GM10248 (cell line): ENCODE measurements at regions of chr7 and their contacts with region 1.

Region 1: DNA sequence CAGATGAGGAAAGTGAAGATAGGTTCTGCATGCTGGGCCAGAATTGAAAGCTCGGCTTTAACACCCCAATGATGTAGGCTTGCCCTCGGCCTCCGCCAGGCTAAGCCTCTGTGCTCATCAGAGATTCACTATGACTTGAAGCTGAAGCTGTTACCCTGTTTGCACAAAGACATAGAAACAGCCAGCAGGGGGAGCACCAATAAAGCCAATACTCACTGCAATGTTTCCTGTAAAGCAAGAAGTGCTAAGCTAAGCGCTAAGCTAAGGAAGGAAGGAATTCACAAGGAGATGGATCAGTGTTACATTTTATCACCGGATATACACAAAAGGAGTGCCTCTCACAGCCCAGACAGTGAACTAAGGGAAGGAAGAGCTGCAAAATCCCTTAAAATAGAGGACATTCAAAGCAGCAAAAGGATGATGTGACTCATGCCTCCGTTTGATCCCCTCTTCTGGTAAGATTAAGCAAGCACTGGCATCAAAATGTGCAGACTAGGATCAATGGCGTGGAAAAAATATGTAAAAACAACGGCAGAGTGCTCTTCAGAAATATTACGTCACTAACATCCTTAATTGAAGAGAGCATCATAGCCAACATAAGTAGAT is 153.8 kb downstream of the COBL start:
- DNase-seq: peak; percentile 46
- CTCF ChIP-seq: peak; percentile 93

Region 2: DNA sequence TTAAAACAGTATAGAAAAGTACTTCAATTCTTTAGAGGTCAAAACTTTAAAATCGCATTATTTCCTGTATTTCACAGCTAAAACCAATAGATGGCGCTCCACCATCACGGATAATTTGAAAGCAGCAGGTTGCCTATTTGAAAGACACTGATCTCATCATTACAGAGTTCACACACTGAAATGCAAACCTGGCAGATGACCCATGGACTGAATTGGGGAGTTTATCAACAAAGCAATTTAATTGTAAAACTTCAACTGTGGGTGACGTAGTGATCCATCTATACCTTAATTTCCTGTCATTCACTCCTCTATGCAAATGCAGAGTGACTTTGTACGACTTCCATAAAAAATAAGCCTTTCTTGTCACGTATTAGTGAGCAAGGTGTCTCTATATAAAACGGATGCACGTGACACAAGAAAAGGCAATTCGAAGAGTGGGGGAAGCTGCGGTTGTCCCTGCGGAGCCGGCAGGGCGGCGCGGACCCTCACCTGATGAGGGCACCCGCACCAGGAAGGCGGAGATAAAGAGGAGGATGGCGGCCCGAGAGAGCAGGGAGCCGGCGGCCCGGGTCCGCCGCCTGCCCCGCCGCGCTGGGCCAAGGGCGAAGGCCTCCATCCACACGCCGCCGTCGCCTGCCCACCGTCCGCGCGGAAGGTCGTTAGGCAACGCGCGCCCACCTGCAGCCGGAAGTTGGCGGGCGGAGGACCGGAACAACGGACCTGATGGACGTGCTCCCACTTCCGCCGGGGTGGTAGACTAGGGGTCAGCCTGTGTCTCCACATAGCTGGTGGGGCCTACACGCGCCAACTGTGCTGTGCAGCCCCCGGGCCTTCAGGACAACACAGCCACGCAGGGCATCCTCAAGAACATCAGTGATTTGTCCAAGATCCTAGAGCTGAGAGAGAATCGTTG is 1070.0 kb before region 1 on chr7 and contains the start of gene ZPBP:
- CTCF ChIA-PET with region 1: interaction called, 52 read pairs
- POLR2A ChIA-PET with region 1: no interaction called
- DNase-seq: peak; percentile 54
- CTCF ChIP-seq: peak; percentile 74

Region 3: DNA sequence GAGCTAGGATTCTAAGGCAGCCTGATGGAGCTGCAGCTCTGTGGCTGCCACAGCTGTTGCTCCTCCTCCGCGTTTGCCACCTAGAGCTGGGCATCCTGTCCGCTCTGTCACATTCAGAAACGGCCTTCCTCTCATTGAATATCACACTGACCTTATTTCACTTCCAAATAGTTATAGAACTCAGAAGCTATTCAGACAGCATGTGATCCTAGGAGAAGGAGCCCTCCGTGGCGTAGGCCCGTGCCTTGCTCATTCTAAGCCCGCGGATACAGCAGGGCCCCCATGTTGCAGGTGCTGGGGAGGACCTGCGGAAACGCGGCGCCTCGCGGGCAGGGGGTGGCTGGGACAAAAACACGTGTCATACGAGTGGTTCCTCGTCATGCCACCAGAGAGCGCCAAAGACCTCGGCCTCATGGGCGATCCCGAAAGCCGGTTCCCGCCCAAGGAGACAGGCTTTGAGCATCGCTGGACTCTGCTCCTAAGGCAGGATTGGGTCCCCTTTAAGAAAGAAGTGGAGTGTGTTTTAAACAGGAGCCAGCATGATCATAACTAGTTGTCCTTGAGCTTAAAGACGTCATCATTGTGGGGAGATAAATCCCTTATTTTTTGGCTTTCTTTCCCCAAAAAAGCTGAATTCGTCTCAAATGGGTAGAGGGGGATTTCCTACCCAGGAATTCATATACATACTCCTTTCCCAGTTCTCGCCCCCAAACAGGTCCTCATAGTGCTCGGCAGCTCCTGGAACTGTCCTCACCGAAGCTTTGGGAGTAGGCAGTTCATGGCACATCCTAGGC is 694.8 kb before region 1 on chr7:
- CTCF ChIA-PET with region 1: interaction called, 27 read pairs
- POLR2A ChIA-PET with region 1: no interaction called
- DNase-seq: peak; percentile 83
- CTCF ChIP-seq: peak; percentile 82

Region 4: GRCh38 chr7:51082096-51082840 is 80.6 kb before region 1 on chr7:
- CTCF ChIA-PET with region 1: interaction called, 10 read pairs
- POLR2A ChIA-PET with region 1: no interaction called
- DNase-seq: no peak
- CTCF ChIP-seq: no peak

Region 5: DNA sequence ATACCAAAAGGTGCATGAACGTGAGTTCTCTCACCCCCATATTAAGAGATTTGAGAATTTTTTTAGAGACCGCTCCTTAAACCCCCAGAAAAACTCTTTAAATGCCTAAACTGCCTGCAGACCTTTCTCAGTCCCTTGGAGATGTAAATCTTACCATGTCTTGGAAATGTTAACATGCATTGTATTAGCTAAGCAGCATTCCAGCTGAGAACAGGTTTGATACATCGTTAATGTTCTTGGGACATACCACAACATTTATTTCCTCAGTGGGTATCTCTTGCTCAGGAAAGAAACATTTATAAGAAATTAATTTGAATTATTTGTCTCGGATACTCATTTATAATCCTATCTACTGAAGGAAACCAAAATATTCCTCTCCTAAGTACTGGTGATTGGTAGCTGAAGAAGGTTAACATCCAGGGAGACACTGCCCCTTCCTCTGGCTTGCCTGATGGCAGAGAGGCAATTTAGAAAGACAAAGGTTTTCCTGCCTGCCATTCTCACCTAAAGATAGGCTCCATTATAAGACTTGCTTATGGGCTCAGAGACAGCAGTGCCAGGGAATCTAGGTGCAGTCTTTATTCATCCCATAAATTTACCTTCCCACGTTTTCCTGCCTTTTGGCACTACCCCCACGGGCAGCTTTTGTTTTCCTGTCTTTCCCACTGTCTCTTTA is 12.6 kb after region 1 on chr7:
- CTCF ChIA-PET with region 1: interaction called, 74 read pairs
- POLR2A ChIA-PET with region 1: no interaction called
- DNase-seq: no peak
- CTCF ChIP-seq: no peak

Region 6: DNA sequence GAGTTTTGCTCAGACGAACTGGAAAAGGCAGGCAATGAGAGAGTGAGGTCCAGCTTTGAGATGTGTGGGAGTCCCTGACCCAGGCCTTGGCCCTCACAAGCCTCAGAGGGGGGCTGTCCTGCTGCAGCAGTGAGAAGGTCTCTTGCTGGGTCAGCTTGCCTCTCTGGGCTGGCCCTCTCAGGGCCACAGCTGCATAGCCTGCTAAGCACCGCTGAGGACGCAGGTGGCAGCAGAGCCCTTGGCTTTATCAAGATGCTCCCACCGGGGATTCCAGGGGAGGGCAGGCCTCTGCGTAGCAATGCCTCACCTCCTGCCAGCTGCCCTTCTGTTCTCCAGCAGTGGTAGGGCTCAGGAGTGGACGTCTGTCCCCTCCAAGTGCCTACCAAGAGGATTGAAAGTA is 25.1 kb after region 1 on chr7:
- CTCF ChIA-PET with region 1: interaction called, 17 read pairs
- POLR2A ChIA-PET with region 1: no interaction called
- DNase-seq: no peak
- CTCF ChIP-seq: no peak